Thyroid gland (tissue), 4 donors: ENCODE measurements at regions of chr1 and their contacts with region 1.

Region 1: DNA sequence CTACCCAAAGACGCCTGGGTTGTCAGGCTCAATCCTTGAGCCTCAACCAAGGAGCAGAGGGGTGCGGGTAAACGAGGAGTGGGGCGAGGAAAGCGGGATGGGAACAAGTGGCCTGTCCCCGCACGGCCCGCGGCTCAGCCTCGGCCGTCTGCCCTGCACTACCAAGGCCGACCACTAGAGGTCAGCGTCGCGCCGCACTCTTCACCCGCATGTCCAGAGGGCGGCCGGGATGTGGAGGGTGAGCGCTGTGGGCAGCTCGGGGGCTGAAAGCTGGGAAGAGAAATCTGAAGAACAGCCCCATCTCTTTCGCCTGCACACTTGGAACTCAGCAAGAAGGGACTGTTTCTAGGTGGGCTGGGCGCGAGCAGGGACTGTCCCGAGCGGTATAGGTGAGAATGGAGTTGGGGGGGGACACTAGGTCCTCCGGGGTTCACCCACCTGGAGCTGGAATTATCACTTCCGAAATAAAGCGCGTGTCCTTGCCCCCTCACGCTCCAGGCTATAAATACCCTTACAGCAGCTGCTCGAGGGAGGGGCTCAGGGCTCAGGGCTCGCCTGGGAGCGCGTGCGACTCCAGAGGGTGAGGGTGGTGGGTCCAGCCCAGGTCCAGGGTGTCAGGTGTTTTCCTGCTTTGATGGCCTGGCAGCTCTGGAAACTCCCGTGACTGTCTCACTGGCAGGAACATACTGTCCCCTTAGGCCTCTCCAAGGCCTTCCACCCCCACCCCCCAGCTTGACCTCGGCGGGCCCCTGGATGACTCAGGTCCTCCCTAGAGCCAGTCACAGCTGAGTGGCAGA is 9.8 kb downstream of the SLC30A2 start:
- DNase-seq: peak; percentile 97 to 99
- H3K4me3 ChIP-seq: peak overlapping the region; percentile 59 to 94 (median 68)
- H3K27ac ChIP-seq: peak overlapping the region; percentile 86 to 95 (median 87)
- H3K4me1 ChIP-seq: peaks cover 25 to 35% of the 10 kb centered on the region in 2 donors
- H3K27me3 ChIP-seq: no peaks in the 10 kb centered on the region
- CTCF ChIP-seq: peak; percentile 98 to 100 (median 99)
- POLR2A ChIP-seq: peak in 1 of 2 donors; percentile 13

Region 2: DNA sequence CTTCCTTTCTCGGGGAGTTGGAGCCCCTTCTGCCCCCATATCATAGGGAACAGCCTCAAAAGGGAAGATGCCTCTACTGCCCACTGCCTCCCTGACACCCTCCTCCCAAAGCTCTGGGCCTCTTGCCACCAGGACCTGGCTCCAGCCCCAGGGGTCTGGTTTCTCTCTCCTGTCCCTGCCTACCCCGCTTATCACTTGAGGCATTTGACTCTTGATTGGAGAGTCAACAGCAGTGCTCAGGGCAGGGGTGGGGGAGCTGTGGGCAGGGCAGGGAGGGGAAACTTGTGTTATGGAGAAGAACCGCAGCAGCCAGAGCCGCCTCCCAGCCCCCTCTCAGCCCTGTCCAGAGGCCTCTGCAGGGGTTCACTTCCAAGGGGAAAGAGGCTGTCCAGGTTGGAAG is 30.7 kb after region 1 on chr1:
- intact Hi-C with region 1: no loop called
- DNase-seq: no peak
- H3K4me3 ChIP-seq: no peak overlapping the region
- H3K27ac ChIP-seq: no peak overlapping the region
- H3K4me1 ChIP-seq: peaks cover 0 to 7% of the 10 kb centered on the region in 2 donors
- H3K27me3 ChIP-seq: no peaks in the 10 kb centered on the region
- CTCF ChIP-seq: no peak
- POLR2A ChIP-seq: no peak

Region 3: GRCh38 chr1:26102526-26102925 is 66.4 kb after region 1 on chr1:
- intact Hi-C with region 1: loop called (anchors 10 kb)
- DNase-seq: no peak
- H3K4me3 ChIP-seq: no peak overlapping the region
- H3K27ac ChIP-seq: no peak overlapping the region
- H3K4me1 ChIP-seq: no peaks in the 10 kb centered on the region
- H3K27me3 ChIP-seq: no peaks in the 10 kb centered on the region
- CTCF ChIP-seq: no peak
- POLR2A ChIP-seq: no peak

Region 4: GRCh38 chr1:26145041-26145959 is 109.1 kb after region 1 on chr1:
- intact Hi-C with region 1: loop called (anchors 10 kb)
- DNase-seq: peak; percentile 88 to 89
- H3K4me3 ChIP-seq: no peak overlapping the region
- H3K27ac ChIP-seq: no peak overlapping the region
- H3K4me1 ChIP-seq: peaks cover 4 to 6% of the 10 kb centered on the region in 2 donors
- H3K27me3 ChIP-seq: no peaks in the 10 kb centered on the region
- CTCF ChIP-seq: peak; percentile 39 to 86 (median 72)
- POLR2A ChIP-seq: no peak